ENCODE measurements at regions of chr11 and their contacts with region 1.

Region 1: DNA sequence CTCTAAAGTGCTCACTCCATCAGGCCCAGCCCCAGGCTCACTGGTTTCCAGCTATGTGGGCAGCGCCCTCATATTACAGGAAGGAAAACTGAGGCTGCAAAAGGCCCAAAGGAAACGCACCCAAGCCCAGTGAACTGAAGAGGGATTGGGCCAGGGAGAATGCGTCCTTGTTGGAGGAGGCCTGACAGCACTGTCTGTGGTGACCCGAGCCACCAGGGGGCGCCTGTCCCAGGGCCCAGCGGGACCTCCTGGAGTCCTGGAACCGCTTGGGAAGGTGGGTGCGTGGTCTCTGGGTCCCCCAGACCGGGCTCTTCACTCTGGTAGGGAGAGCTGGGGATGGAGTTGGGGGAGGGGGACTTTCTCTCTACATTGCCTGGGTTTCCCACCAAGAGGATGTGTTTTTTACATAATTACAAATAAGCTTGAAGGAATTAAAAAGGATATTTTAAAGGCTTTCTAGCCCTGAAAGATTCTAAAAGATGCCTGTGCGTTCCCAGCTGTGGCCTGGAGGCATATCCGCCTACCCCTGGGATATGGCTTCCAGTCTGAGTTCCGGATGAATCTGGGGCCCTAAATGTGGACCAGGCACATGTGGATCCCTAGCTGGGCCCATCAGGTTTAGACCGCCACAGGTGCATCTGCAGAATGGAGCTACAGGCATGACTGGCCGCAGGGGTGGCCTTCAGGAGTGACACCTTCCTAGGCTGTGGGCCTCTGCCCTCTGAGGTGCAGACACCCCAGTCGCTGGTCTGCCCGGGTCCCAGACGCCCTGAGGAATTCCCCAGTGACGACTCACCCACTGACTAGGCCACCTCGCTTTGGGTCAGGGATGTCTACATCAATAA is 4.2 kb downstream of the SPI1 start:
- DNase-seq: peak; percentile 86 to 96 (median 95)
- ATAC-seq: peak; percentile 79 to 86
- H3K4me3 ChIP-seq: no peak overlapping the region
- H3K27ac ChIP-seq: no peak overlapping the region
- H3K4me1 ChIP-seq: no peaks in the 10 kb centered on the region
- H3K27me3 ChIP-seq: no peaks in the 10 kb centered on the region

Region 2: GRCh38 chr11:47407746-47408590 is 33.9 kb after region 1 on chr11 and contains the start of gene SLC39A13:
- intact Hi-C with region 1: loop called in 1 of 4 experiments (anchors 5 kb)
- DNase-seq: peak; percentile 95 to 98 (median 98)
- ATAC-seq: peak; percentile 92 to 94
- H3K4me3 ChIP-seq: peak within 1 kb of the TSS; percentile 78
- H3K27ac ChIP-seq: peak within 1 kb of the TSS; percentile 100
- H3K4me1 ChIP-seq: peaks cover 8% of the 10 kb centered on the region
- H3K27me3 ChIP-seq: no peaks in the 10 kb centered on the region
- total RNA-seq, gene SLC39A13: 41.7 to 46.6 (median 44.9) TPM

Region 3: DNA sequence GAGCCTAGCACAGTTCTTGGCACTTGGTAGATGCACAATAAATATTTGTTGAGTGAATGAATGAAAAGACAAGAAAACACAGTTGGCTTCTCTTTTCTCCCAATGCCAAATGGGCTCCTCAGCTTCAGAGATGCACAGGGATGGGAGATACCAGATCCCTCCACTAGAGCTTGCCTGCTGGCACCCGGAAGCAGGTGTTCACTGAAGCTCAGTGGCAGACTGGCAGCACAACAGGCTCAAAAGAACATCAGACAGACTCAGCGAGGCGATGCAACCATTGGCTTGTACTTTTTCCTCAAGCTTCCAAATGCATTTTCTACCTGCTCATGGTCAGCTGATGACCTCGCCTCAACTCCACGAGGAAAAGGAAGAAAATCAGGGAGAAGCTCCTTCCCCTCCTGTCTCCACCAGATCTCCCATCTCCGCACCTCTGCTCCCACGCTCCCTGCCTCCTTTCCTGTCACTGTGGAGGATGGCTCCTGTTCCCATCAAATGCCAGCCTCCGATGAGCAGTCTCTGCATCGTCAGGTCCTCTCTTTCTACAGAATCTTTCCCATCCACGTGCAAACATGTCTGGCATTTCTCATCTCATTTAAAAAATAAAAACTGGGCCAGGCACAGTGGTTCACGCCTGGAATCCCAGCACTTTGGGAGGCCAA is 69.1 kb after region 1 on chr11:
- intact Hi-C with region 1: loop called in 1 of 4 experiments (anchors 10 kb)
- DNase-seq: no peak
- ATAC-seq: no peak
- H3K4me3 ChIP-seq: no peak overlapping the region
- H3K27ac ChIP-seq: no peak overlapping the region
- H3K4me1 ChIP-seq: no peaks in the 10 kb centered on the region
- H3K27me3 ChIP-seq: no peaks in the 10 kb centered on the region

Region 4: GRCh38 chr11:47454180-47454644 is 80.1 kb after region 1 on chr11:
- intact Hi-C with region 1: loop called (anchors 5 to 10 kb)
- DNase-seq: peak; percentile 72 to 88 (median 81)
- ATAC-seq: peak; percentile 87 to 92
- H3K4me3 ChIP-seq: no peak overlapping the region
- H3K27ac ChIP-seq: no peak overlapping the region
- H3K4me1 ChIP-seq: no peaks in the 10 kb centered on the region
- H3K27me3 ChIP-seq: no peaks in the 10 kb centered on the region

Region 5: GRCh38 chr11:47858169-47858543 is 484.1 kb after region 1 on chr11:
- intact Hi-C with region 1: loop called in 1 of 4 experiments (anchors 10 kb)
- DNase-seq: no peak
- ATAC-seq: peak; percentile 83 to 91
- H3K4me3 ChIP-seq: no peak overlapping the region
- H3K27ac ChIP-seq: no peak overlapping the region
- H3K4me1 ChIP-seq: no peaks in the 10 kb centered on the region
- H3K27me3 ChIP-seq: no peaks in the 10 kb centered on the region

Region 6: GRCh38 chr11:48242501-48242900 is 868.4 kb after region 1 on chr11:
- intact Hi-C with region 1: no loop called
- DNase-seq: no peak
- ATAC-seq: no peak
- H3K4me3 ChIP-seq: no peak overlapping the region
- H3K27ac ChIP-seq: no peak overlapping the region
- H3K4me1 ChIP-seq: no peaks in the 10 kb centered on the region
- H3K27me3 ChIP-seq: no peaks in the 10 kb centered on the region